K562 (cell line): ENCODE measurements at regions of chr16 and their contacts with region 1.

Region 1: DNA sequence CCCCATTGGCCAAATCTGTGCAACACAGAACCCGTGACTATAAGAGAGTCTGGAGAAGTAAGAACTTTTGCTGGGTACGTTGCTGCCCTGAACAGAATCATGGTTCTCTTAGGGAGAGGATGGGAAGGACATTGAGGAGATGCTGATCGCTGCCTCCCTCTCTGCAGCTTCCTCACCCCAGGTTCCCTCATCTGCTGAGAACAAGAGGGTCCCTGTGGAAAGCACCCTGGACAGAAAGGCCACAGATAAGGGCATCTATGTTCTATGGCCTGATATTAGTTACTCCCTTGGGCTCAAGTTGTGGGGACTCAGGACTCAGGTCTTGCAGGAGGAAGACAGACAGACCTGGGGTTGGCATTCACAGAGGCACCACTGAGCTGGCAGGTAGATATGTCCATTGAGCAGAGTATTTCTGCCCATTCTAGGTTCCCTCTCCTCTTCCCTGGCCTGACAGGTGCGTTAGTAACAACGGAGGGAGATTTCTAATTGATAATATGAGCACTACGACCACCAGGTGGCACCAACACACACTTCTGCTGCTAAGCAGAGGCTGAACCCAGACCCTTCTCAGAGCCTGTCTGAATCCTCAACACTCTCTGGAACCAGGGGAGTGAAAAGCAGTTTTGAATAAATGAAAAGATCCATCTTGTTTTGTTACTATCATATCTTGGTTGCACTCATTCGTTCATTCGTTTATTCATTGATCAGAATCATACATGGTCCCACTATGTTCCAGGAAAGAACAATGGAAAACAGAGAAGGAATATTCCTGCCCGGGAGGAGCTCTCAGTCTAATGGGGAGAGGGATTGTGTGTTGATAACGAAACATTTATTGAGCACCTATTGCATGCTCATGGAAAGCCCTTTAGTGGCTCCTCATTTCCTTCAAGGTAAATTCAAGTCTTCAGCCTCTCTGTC is 56.4 kb downstream of the SLC6A2 start:
- DNase-seq: peak; percentile 59 to 73 (median 68)
- ATAC-seq: peak; percentile 92
- H3K4me3 ChIP-seq: no peak overlapping the region
- H3K27ac ChIP-seq: no peak overlapping the region
- H3K4me1 ChIP-seq: no peaks in the 10 kb centered on the region
- H3K27me3 ChIP-seq: peaks cover 4 to 6% of the 10 kb centered on the region in 2 experiments; a peak in 3 of 5 replicates
- CTCF ChIP-seq: peak; percentile 67 to 75 (median 71)
- EP300 ChIP-seq: no peak
- POLR2A ChIP-seq: no peak
- RAD21 ChIP-seq: peak; percentile 83 to 90

Region 2: DNA sequence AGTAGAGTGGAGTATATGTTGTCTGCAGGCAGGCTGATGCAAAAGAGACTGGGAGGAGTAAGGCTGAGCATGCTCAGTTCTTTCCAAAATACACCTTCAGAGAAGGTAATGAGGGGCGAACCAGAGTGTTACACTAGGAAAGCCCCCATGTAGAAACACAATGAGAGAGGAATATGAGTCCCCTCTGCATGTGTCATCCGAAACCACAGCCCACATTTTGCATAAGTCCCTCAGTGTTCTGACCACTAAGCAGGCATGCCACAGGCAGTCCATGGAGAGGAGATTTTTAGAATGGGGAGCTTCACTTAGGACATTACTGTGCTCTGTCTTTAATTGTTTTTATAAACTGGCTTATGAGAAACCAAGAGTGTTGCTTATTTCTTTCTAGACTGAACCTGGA is 24.4 kb before region 1 on chr16:
- CTCF ChIA-PET with region 1: no interaction called
- POLR2A ChIA-PET with region 1: no interaction called
- in situ Hi-C with region 1: no loop called
- intact Hi-C with region 1: no loop called
- DNase-seq: no peak
- ATAC-seq: no peak
- H3K4me3 ChIP-seq: no peak overlapping the region
- H3K27ac ChIP-seq: no peak overlapping the region
- H3K4me1 ChIP-seq: no peaks in the 10 kb centered on the region; a peak in 1 of 5 replicates
- H3K27me3 ChIP-seq: peaks cover 0 to 5% of the 10 kb centered on the region in 2 experiments; a peak in 1 of 5 replicates
- CTCF ChIP-seq: no peak
- EP300 ChIP-seq: no peak
- POLR2A ChIP-seq: no peak
- RAD21 ChIP-seq: no peak

Region 3: GRCh38 chr16:55842369-55843104 is 130.3 kb after region 1 on chr16:
- CTCF ChIA-PET with region 1: interaction called, 28 read pairs
- POLR2A ChIA-PET with region 1: interaction called, 3 read pairs
- in situ Hi-C with region 1: loop called (anchors 5 kb)
- intact Hi-C with region 1: loop called (anchors 1 kb)
- DNase-seq: peak; percentile 59 to 61 (median 60)
- ATAC-seq: peak; percentile 85
- H3K4me3 ChIP-seq: no peak overlapping the region
- H3K27ac ChIP-seq: no peak overlapping the region
- H3K4me1 ChIP-seq: no peaks in the 10 kb centered on the region
- H3K27me3 ChIP-seq: peaks cover 0 to 7% of the 10 kb centered on the region in 2 experiments; a peak in 2 of 5 replicates
- CTCF ChIP-seq: peak; percentile 65 to 85 (median 67)
- EP300 ChIP-seq: no peak
- POLR2A ChIP-seq: no peak
- RAD21 ChIP-seq: peak; percentile 82 to 86